ENCODE measurements at regions of chr5 and their contacts with region 1.

Region 1: DNA sequence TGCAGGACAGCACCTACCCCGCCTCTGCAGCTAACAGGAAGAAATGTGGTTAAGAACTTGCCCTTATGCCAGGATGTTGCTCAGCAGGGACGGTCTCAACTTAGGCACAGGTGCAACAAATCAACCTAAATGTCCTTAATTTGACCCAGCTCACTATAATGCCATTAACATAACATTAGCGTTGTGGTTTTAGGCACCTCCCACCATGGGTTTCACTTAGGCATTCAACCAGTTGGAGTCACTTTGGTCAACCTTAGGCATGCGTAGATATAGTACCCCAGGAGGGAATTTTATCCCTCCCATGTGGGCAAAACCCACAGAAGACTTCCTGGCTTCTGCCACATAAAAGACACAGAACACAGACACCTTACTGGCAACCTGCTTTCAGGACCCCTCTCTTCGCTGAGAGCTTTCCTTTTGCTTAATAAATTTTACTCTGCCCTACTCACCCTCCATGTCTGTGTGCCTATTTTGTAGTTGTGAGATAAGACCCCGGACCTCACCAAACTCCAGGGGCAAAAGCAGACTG is 8.7 kb upstream of the ERAP1 start:
- DNase-seq: peak; percentile 44
- H3K4me3 Mint-ChIP-seq: peak overlapping the region; percentile 77
- H3K27ac Mint-ChIP-seq: peak overlapping the region; percentile 91
- H3K4me1 Mint-ChIP-seq: peaks cover 55% of the 10 kb centered on the region
- H3K27me3 Mint-ChIP-seq: no peaks in the 10 kb centered on the region

Region 2: GRCh38 chr5:96861076-96861475 is 44.6 kb after region 1 on chr5:
- intact Hi-C with region 1: loop called (anchors 2 kb)
- DNase-seq: no peak
- H3K4me3 Mint-ChIP-seq: no peak overlapping the region
- H3K27ac Mint-ChIP-seq: no peak overlapping the region
- H3K4me1 Mint-ChIP-seq: peaks cover 38% of the 10 kb centered on the region
- H3K27me3 Mint-ChIP-seq: no peaks in the 10 kb centered on the region

Measured in activated T-helper 2 cell treated with anti-CD3 and anti-CD28 coated beads, Interferon-gamma antibody, Interleukin-2, Interleukin-4, amounts not matched to agents 10 μg/mL and 5 μg/mL and 100 μg/mL, durations not matched to agents 14 hours and 24 hours and 36 hours (primary cell).